Esophagus squamous epithelium (tissue), 5 donors: ENCODE measurements at regions of chr20 and their contacts with region 1.

Region 1: GRCh38 chr20:5569021-5569420 is 181.2 kb upstream of the SHLD1 start:
- DNase-seq: no peak
- H3K4me3 ChIP-seq: no peak overlapping the region
- H3K27ac ChIP-seq: no peak overlapping the region
- H3K4me1 ChIP-seq: no peaks in the 10 kb centered on the region
- H3K27me3 ChIP-seq: no peaks in the 10 kb centered on the region
- CTCF ChIP-seq: peak; percentile 48 to 68 (median 56)
- POLR2A ChIP-seq: no peak

Region 2: GRCh38 chr20:5788385-5788895 is 219.4 kb after region 1 on chr20:
- intact Hi-C with region 1: loop called (anchors 5 kb)
- DNase-seq: peak; percentile 40
- H3K4me3 ChIP-seq: no peak overlapping the region
- H3K27ac ChIP-seq: no peak overlapping the region
- H3K4me1 ChIP-seq: peaks cover 0 to 39% (median 13%) of the 10 kb centered on the region in 3 donors
- H3K27me3 ChIP-seq: no peaks in the 10 kb centered on the region
- CTCF ChIP-seq: peak; percentile 77 to 93 (median 92)
- POLR2A ChIP-seq: no peak